ENCODE measurements at regions of chr20 and their contacts with region 1.

Region 1: GRCh38 chr20:63495741-63496595 is 2.9 kb downstream of the EEF1A2 start:
- DNase-seq: peak; percentile 66 to 88 (median 76)
- ATAC-seq: peak; percentile 15 to 44 (median 32)
- H3K4me3 ChIP-seq: peak overlapping the region; percentile 15 to 92 (median 64)
- H3K27ac ChIP-seq: peak overlapping the region in 10 of 12 donors; percentile 37 to 100 (median 94)
- H3K4me1 ChIP-seq: peaks cover 2 to 56% (median 26%) of the 10 kb centered on the region in 12 donors
- H3K27me3 ChIP-seq: peaks cover 0 to 39% (median 18%) of the 10 kb centered on the region in 9 donors
- CTCF ChIP-seq: peak; percentile 89 to 98 (median 96)
- POLR2A ChIP-seq: no peak

Region 2: DNA sequence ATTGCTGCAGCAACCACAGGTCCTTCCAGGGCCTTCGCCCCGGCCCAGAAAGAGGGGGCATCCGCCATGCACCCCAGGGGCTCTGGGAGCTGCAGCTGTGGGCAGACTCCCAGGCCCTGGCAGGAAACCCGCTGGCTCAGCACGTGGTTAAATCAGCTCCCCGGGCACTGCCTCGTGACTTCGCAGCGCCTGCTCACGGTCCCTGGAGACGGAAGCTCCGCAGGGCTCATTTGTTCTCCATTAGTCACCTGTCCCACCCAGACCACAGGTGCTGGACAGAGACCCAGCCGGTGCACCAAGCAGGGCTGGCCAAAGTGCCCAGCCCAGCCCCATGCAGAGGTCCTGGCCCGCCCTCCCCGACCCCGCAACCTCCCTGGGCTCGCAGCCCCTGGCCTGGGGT is 38.2 kb before region 1 on chr20:
- intact Hi-C with region 1: loop called in 1 of 10 experiments (anchors 1 kb)
- DNase-seq: peak; percentile 44 to 83 (median 75)
- ATAC-seq: peak; percentile 47 to 82 (median 65)
- H3K4me3 ChIP-seq: no peak overlapping the region
- H3K27ac ChIP-seq: peak overlapping the region in 3 of 12 donors; percentile 14 to 54 (median 44)
- H3K4me1 ChIP-seq: peaks cover 0 to 45% (median 18%) of the 10 kb centered on the region in 12 donors
- H3K27me3 ChIP-seq: peaks cover 0 to 56% (median 21%) of the 10 kb centered on the region in 9 donors
- CTCF ChIP-seq: no peak
- POLR2A ChIP-seq: no peak

Region 3: GRCh38 chr20:63520504-63520933 is 24.6 kb after region 1 on chr20 and contains the start of gene PPDPF:
- intact Hi-C with region 1: loop called in 6 of 10 experiments (anchors 1 to 2 kb)
- DNase-seq: peak; percentile 83 to 94 (median 89)
- ATAC-seq: peak; percentile 70 to 91 (median 87)
- H3K4me3 ChIP-seq: peak within 1 kb of the TSS; percentile 73 to 98 (median 88)
- H3K27ac ChIP-seq: peak within 1 kb of the TSS; percentile 89 to 99 (median 97)
- H3K4me1 ChIP-seq: peaks cover 0 to 35% (median 22%) of the 10 kb centered on the region in 12 donors
- H3K27me3 ChIP-seq: no peaks in the 10 kb centered on the region
- CTCF ChIP-seq: no peak
- POLR2A ChIP-seq: peak in 1 of 2 donors; percentile 91
- total RNA-seq, gene PPDPF: 182 to 424 (median 235) TPM